ENCODE measurements at regions of chr5 and their contacts with region 1.

Region 1: DNA sequence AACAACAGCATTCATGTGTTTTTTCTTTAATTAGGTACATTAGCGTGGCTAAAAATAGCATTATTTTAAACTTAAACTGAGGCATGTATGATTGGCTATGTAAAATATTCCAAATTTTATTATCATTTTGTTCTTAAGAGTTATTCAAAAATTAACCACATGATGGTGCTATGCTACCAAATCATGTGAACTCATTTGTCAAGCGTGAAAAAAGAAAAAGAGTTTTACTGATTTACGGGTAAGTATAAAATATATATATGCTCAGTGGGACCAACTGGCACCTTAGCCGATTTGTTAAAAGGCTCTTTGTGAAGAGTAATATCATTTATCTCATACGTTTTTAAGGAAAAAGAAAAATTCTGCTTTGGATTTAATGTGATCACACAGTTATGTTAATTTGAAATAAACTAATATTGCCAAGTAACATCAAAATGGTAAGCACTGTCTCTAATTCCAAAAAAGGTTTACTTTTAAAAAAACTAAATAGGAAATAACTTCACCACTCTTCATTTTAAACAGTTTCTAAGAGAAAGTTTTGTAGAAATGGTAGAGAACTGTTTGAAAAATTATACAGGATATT is 1042.3 kb downstream of the CDH12 start:
- DNase-seq: peak; percentile 51
- H3K4me3 ChIP-seq: no peak overlapping the region
- H3K27ac ChIP-seq: no peak overlapping the region
- H3K4me1 ChIP-seq: peaks cover 5% of the 10 kb centered on the region
- H3K27me3 ChIP-seq: no peaks in the 10 kb centered on the region
- CTCF ChIP-seq: peak in 1 of 2 donors; percentile 18
- POLR2A ChIP-seq: no peak

Region 2: GRCh38 chr5:21723500-21723899 is 87.3 kb before region 1 on chr5:
- CTCF ChIA-PET with region 1: no interaction called
- POLR2A ChIA-PET with region 1: no interaction called
- dilution Hi-C with region 1: no loop called
- intact Hi-C with region 1: no loop called
- DNase-seq: no peak
- H3K4me3 ChIP-seq: no peak overlapping the region
- H3K27ac ChIP-seq: no peak overlapping the region
- H3K4me1 ChIP-seq: no peaks in the 10 kb centered on the region
- H3K27me3 ChIP-seq: no peaks in the 10 kb centered on the region
- CTCF ChIP-seq: no peak
- POLR2A ChIP-seq: no peak

Region 3: GRCh38 chr5:22044229-22044628 is 233.4 kb after region 1 on chr5:
- CTCF ChIA-PET with region 1: no interaction called
- POLR2A ChIA-PET with region 1: no interaction called
- dilution Hi-C with region 1: no loop called
- intact Hi-C with region 1: loop called (anchors 2 kb)
- DNase-seq: no peak
- H3K4me3 ChIP-seq: no peak overlapping the region
- H3K27ac ChIP-seq: no peak overlapping the region
- H3K4me1 ChIP-seq: no peaks in the 10 kb centered on the region
- H3K27me3 ChIP-seq: no peaks in the 10 kb centered on the region
- CTCF ChIP-seq: no peak
- POLR2A ChIP-seq: no peak

Region 4: GRCh38 chr5:23139338-23140171 is 1328.7 kb after region 1 on chr5:
- CTCF ChIA-PET with region 1: no interaction called
- POLR2A ChIA-PET with region 1: no interaction called
- dilution Hi-C with region 1: no loop called
- intact Hi-C with region 1: loop called (anchors 2 kb)
- DNase-seq: peak; percentile 1
- H3K4me3 ChIP-seq: no peak overlapping the region
- H3K27ac ChIP-seq: no peak overlapping the region
- H3K4me1 ChIP-seq: no peaks in the 10 kb centered on the region
- H3K27me3 ChIP-seq: no peaks in the 10 kb centered on the region
- CTCF ChIP-seq: no peak
- POLR2A ChIP-seq: no peak